Mammary epithelial cell (primary cell): ENCODE measurements at regions of chr2 and their contacts with region 1.

Region 1: DNA sequence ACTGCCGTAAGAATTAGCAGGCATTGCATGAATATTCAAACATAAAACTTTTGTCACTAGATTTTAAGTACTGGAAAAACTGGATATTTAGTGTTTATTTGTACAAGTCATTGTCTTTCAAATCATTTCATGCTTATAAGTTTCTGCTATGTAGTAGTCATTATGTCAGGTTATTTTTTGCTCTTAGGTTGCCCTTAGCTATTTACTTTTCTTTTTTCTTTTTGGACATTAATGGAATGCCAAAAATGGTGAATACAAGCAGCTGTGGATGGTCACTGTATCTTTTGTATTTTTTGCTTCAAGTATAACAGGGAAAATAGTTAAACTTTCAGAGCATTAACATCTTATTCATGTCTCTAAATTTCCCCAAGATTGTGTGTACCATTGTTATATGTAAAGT is 18.6 kb upstream of the KCNJ13 start:
- DNase-seq: no peak
- H3K4me3 ChIP-seq: no peak overlapping the region
- H3K27ac ChIP-seq: no peak overlapping the region
- H3K4me1 ChIP-seq: no peaks in the 10 kb centered on the region
- H3K27me3 ChIP-seq: no peaks in the 10 kb centered on the region
- CTCF ChIP-seq: no peak

Region 2: DNA sequence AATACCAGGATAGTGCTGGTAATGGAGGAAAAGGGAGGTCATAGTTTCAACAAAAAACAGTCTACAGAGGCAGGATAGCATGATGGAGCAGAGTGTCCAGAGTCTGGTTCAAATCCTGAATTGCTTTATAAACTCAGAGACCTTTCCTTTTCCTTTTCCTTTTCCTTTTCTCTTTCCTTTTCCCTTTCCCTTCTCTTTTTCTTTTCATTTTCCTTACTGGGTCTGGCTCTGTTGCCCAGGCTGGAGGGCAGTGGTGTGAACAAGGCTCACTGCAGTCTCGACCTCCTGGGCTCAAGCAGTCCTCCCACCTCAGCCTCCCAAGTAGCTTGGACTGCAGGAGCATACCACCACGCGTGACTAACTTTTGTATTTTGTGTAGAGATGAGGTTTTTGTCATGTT is 66.2 kb before region 1 on chr2:
- CTCF ChIA-PET with region 1: no interaction called
- dilution Hi-C with region 1: loop called (anchors 5 kb)
- in situ Hi-C with region 1: no loop called
- intact Hi-C with region 1: no loop called
- DNase-seq: no peak
- H3K4me3 ChIP-seq: no peak overlapping the region
- H3K27ac ChIP-seq: no peak overlapping the region
- H3K4me1 ChIP-seq: peaks cover 7% of the 10 kb centered on the region
- H3K27me3 ChIP-seq: no peaks in the 10 kb centered on the region
- CTCF ChIP-seq: no peak

Region 3: GRCh38 chr2:232835687-232836208 is 40.8 kb after region 1 on chr2:
- CTCF ChIA-PET with region 1: no interaction called
- dilution Hi-C with region 1: no loop called
- in situ Hi-C with region 1: no loop called
- intact Hi-C with region 1: no loop called
- DNase-seq: no peak
- H3K4me3 ChIP-seq: no peak overlapping the region
- H3K27ac ChIP-seq: no peak overlapping the region
- H3K4me1 ChIP-seq: peaks cover 10% of the 10 kb centered on the region
- H3K27me3 ChIP-seq: no peaks in the 10 kb centered on the region
- CTCF ChIP-seq: no peak

Region 4: GRCh38 chr2:232876078-232876977 is 81.3 kb after region 1 on chr2:
- CTCF ChIA-PET with region 1: no interaction called
- dilution Hi-C with region 1: loop called (anchors 5 kb)
- in situ Hi-C with region 1: no loop called
- intact Hi-C with region 1: no loop called
- DNase-seq: peak; percentile 14
- H3K4me3 ChIP-seq: peak overlapping the region in 2 of 3 experiments; percentile 46 to 54
- H3K27ac ChIP-seq: no peak overlapping the region
- H3K4me1 ChIP-seq: peaks cover 15% of the 10 kb centered on the region
- H3K27me3 ChIP-seq: no peaks in the 10 kb centered on the region
- CTCF ChIP-seq: peak in 1 of 2 donors; percentile 34

Region 5: DNA sequence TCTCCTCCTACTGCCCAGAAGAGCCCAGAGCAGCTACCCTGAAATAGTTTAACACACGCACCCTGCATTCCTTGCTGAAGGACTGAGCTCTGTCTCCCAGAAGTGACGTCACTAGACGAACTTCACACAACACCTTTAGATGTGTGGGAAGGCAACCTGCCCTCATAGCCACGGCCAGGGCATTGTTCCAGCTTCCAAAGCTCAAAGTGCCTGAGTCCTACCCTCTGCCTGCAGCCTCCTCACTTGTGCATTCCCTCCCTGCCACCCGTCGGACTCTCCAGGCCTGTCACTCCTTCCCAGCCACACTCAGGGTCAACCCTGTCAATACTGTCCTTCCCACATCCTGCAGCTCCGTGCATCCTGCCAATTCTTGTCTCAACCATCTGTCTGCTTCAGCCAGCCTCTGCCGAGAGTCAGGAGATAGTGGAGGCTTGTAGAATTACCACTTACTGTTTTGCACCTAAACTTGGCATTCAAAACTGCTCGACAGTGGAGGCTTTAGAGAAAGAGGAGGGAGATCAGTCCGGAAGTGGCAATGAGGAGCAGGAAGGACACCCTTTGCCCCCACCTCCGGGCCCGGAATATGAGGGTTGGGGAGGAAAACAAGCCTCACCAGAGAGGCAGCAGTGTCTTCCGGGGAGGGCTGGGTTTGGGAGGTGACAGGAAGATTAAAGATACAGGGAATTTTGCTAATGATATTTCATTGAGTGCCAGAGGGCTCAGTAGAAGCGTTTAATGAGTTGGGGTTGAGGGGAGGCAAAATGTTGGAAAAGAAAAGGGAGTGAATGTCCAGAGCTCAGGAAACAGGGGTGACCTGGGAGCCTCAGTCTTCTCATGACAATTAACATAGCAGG is 384.2 kb after region 1 on chr2:
- CTCF ChIA-PET with region 1: no interaction called
- dilution Hi-C with region 1: no loop called
- in situ Hi-C with region 1: no loop called
- intact Hi-C with region 1: no loop called
- DNase-seq: no peak
- H3K4me3 ChIP-seq: no peak overlapping the region
- H3K27ac ChIP-seq: no peak overlapping the region
- H3K4me1 ChIP-seq: no peaks in the 10 kb centered on the region
- H3K27me3 ChIP-seq: no peaks in the 10 kb centered on the region
- CTCF ChIP-seq: no peak